ENCODE measurements at regions of chr17 and their contacts with region 1.

Region 1: DNA sequence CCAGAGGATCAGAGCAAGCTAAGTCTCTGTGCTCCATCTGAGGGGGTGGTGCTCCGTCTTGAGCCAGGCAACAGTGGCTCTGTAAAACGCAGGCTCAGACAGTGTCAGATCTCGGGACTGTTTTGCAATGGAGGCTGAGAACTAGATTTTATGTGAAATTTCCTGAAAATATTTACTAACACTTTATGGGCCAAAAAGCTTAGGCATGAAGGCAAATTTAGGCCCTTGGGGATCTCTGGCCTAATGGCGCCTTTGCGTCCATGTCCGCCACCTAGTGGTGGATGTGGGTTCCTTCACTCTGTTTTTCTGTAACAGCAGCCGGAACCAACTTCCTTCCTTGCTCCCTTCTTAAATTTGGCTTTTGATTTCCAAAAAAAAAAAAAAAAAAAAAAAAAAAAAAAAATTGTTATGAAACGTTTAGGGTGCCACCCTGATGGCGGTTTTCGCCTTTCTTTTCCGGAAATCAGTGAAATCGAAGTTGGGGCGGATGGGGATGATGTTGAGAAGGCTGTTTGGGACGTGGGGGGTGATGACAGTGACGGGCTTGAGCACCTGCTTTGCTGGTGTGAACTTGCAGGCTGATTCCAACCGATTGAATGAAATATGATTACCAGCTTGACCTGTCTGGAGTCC is 14.0 kb upstream of the ELAC2 start:
- DNase-seq: no peak
- ATAC-seq: peak; percentile 89
- H3K4me3 ChIP-seq: no peak overlapping the region
- H3K27ac ChIP-seq: no peak overlapping the region
- H3K4me1 ChIP-seq: no peaks in the 10 kb centered on the region
- H3K27me3 ChIP-seq: no peaks in the 10 kb centered on the region
- CTCF ChIP-seq: peak; percentile 69 to 87 (median 81)
- EP300 ChIP-seq: no peak
- POLR2A ChIP-seq: no peak
- RAD21 ChIP-seq: peak; percentile 47; the same call in 1 of the 2 replicates

Region 2: GRCh38 chr17:11969565-11969964 is 1062.3 kb before region 1 on chr17:
- CTCF ChIA-PET with region 1: no interaction called
- POLR2A ChIA-PET with region 1: no interaction called
- RAD21 ChIA-PET with region 1: no interaction called
- SMC1A ChIA-PET with region 1: no interaction called
- in situ Hi-C with region 1: no loop called
- intact Hi-C with region 1: no loop called
- DNase-seq: no peak
- ATAC-seq: no peak
- H3K4me3 ChIP-seq: no peak overlapping the region
- H3K27ac ChIP-seq: no peak overlapping the region
- H3K4me1 ChIP-seq: no peaks in the 10 kb centered on the region
- H3K27me3 ChIP-seq: no peaks in the 10 kb centered on the region
- CTCF ChIP-seq: no peak
- EP300 ChIP-seq: no peak
- POLR2A ChIP-seq: no peak
- RAD21 ChIP-seq: no peak

Region 3: DNA sequence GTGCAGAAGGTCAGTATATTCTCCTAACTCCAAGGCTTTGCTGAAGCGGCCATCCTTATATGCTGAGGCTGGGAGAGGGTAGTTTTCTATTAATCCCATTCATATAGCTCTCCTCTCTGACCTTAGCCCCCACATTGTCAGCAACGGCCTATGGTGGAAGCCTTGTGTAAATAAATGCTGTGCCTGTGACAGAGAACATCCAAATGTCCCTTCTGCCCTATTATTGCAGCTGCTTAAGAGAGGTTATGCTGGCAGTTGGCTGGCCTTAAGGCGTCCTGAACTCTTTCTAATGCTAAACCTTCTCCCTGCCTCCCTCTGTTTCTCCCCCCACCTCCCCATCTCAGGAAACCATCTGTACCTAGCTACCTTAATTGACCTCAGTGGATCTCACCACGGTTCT is 188.9 kb before region 1 on chr17:
- CTCF ChIA-PET with region 1: no interaction called
- POLR2A ChIA-PET with region 1: no interaction called
- RAD21 ChIA-PET with region 1: no interaction called
- SMC1A ChIA-PET with region 1: no interaction called
- in situ Hi-C with region 1: no loop called
- intact Hi-C with region 1: no loop called
- DNase-seq: no peak
- ATAC-seq: no peak
- H3K4me3 ChIP-seq: no peak overlapping the region
- H3K27ac ChIP-seq: no peak overlapping the region
- H3K4me1 ChIP-seq: no peaks in the 10 kb centered on the region
- H3K27me3 ChIP-seq: no peaks in the 10 kb centered on the region
- CTCF ChIP-seq: no peak
- EP300 ChIP-seq: no peak
- POLR2A ChIP-seq: no peak
- RAD21 ChIP-seq: no peak

Region 4: DNA sequence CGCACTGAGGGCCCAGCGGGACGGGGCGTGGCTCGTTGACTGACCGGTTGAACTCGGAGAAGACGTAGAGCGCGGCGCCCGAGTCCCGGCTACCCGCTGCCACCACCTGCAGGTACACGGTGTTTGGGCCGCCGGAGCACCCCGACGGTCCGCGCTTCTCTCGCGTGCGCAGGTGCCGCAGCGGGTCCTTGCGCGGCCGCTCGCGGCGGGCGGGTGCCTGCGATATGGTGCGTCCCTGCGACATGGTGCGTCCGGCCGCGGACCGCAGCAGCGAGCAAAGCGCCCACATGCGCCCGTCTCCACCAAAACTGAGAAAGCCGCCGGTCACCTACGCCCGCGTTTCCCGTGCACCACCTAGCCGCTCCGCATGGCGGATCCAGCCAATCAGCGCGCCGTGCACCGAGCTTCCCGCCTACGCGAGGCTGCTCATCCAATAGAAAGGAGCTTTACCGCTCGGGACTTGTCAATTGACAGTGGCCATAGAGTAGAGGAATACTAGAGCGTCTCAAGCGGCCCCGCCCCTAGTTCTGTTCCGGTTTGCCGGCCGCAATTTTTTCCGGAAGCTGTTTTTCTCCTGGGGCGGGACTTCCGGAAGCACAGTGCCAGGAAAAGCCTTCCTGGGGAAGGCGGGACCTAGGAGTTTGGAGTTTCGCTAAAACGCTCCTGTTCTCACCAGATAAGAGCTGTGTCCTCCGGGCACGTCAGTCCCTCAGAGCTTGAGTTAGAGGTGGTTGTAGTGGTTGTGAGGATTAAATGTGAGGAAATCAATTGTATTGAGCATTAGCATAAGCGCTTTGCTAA is 14.0 kb before region 1 on chr17 and contains the start of gene ELAC2:
- CTCF ChIA-PET with region 1: interaction called, 137 read pairs
- POLR2A ChIA-PET with region 1: interaction called, 3 read pairs
- RAD21 ChIA-PET with region 1: interaction called, 21 read pairs
- SMC1A ChIA-PET with region 1: interaction called, 31 read pairs
- in situ Hi-C with region 1: no loop called
- intact Hi-C with region 1: no loop called
- DNase-seq: peak; percentile 88
- ATAC-seq: peak; percentile 98
- H3K4me3 ChIP-seq: peak within 1 kb of the TSS; percentile 80
- H3K27ac ChIP-seq: peak within 1 kb of the TSS; percentile 78
- H3K4me1 ChIP-seq: no peaks in the 10 kb centered on the region
- H3K27me3 ChIP-seq: no peaks in the 10 kb centered on the region
- CTCF ChIP-seq: 0 out of 6 replicates have a peak, but pooled peaks of 1 of the 3 experiments have one; percentile 16
- EP300 ChIP-seq: no peak
- POLR2A ChIP-seq: peak; percentile 95
- RAD21 ChIP-seq: no peak
- polyA plus RNA-seq, gene ELAC2: 5.1 to 11.0 TPM

Region 5: DNA sequence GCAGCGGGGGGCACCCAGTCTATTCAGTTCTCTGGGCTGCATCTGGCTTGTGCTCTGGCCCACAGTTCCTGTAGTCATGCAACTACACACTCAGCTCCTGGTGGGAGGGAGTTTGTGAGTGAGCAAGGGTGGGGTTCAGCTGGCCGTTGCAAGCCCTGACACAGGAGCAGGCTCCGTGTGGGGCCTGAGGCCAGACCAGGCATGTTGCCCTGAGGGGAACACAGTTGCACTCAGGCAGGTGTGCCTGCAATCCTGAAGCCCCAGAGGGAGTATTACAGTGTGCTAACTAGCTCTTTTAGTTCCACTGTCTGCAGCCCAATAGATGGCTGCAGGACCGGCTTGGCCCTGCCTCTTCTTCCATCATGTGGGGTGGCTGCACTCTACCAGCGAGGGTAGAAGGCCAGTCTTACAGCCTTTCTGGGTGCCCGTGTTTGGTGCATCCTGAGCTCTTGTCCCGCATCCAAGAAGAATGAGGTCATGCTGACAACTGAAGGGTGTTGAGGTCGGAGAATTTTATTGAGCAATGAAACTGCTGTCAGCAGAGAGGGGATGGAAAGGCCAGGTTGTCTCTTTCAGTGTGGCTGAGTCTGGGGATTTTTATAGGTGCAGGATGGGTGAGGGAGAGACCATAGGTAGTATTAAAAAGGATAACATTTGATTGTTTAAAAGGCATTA is 35.9 kb after region 1 on chr17:
- CTCF ChIA-PET with region 1: interaction called, 11 read pairs
- POLR2A ChIA-PET with region 1: no interaction called
- RAD21 ChIA-PET with region 1: interaction called, 3 read pairs
- SMC1A ChIA-PET with region 1: interaction called, 6 read pairs
- in situ Hi-C with region 1: no loop called
- intact Hi-C with region 1: no loop called
- DNase-seq: no peak
- ATAC-seq: no peak
- H3K4me3 ChIP-seq: no peak overlapping the region
- H3K27ac ChIP-seq: no peak overlapping the region
- H3K4me1 ChIP-seq: no peaks in the 10 kb centered on the region
- H3K27me3 ChIP-seq: no peaks in the 10 kb centered on the region
- CTCF ChIP-seq: no peak
- EP300 ChIP-seq: no peak
- POLR2A ChIP-seq: no peak
- RAD21 ChIP-seq: no peak

Region 6: GRCh38 chr17:13114601-13115031 is 82.8 kb after region 1 on chr17:
- CTCF ChIA-PET with region 1: interaction called, 45 read pairs
- POLR2A ChIA-PET with region 1: no interaction called
- RAD21 ChIA-PET with region 1: interaction called, 7 read pairs
- SMC1A ChIA-PET with region 1: interaction called, 5 read pairs
- in situ Hi-C with region 1: no loop called
- intact Hi-C with region 1: no loop called
- DNase-seq: no peak
- ATAC-seq: peak; percentile 63
- H3K4me3 ChIP-seq: no peak overlapping the region
- H3K27ac ChIP-seq: no peak overlapping the region
- H3K4me1 ChIP-seq: no peaks in the 10 kb centered on the region
- H3K27me3 ChIP-seq: no peaks in the 10 kb centered on the region
- CTCF ChIP-seq: peak; percentile 37 to 61 (median 38); a peak in 4 of 6 replicates
- EP300 ChIP-seq: no peak
- POLR2A ChIP-seq: no peak
- RAD21 ChIP-seq: no peak; the same call in 1 of the 2 replicates

Region 7: GRCh38 chr17:13337864-13338371 is 306.1 kb after region 1 on chr17:
- CTCF ChIA-PET with region 1: interaction called, 17 read pairs
- POLR2A ChIA-PET with region 1: no interaction called
- RAD21 ChIA-PET with region 1: no interaction called
- SMC1A ChIA-PET with region 1: interaction called, 11 read pairs
- in situ Hi-C with region 1: no loop called
- intact Hi-C with region 1: no loop called
- DNase-seq: no peak
- ATAC-seq: no peak
- H3K4me3 ChIP-seq: no peak overlapping the region
- H3K27ac ChIP-seq: no peak overlapping the region
- H3K4me1 ChIP-seq: no peaks in the 10 kb centered on the region
- H3K27me3 ChIP-seq: no peaks in the 10 kb centered on the region
- CTCF ChIP-seq: peak; percentile 48 to 69 (median 60); a peak in 5 of 6 replicates
- EP300 ChIP-seq: no peak
- POLR2A ChIP-seq: no peak
- RAD21 ChIP-seq: peak; percentile 59

Measured in GM12878 (cell line).